ENCODE measurements at regions of chr7 and their contacts with region 1.

Region 1: GRCh38 chr7:142603870-142604448 is 145.3 kb upstream of the PRSS1 start:
- DNase-seq: peak; percentile 60
- ATAC-seq: peak; percentile 55
- H3K4me3 Mint-ChIP-seq: no peak overlapping the region
- H3K27ac Mint-ChIP-seq: no peak overlapping the region
- H3K4me1 Mint-ChIP-seq: 0 out of 2 replicates have a peak, but pooled peaks cover 2% of the 10 kb centered on the region
- H3K27me3 Mint-ChIP-seq: no peaks in the 10 kb centered on the region; the same call in 1 of the 2 replicates
- CTCF ChIP-seq: peak; percentile 42; the same call in 1 of the 2 replicates

Region 2: DNA sequence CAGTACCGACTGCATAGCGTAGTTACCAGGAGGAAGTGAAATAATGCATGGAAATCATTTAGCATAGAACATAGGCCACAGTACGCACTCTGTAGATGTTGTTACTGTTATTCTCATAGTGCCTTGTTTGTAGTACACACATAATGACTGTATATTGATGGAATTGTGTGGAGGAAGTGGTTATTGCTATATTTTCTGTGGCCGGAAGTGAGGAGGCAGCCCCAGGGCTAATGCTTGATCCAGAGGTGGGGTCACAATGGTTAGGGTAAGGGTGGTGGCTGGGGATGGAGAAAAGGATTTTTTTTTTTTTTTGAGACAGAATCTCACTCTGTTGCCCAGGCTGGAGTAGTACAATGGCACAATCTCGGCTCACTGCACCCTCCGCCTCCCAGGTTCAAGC is 612.8 kb before region 1 on chr7:
- CTCF ChIA-PET with region 1: no interaction called
- POLR2A ChIA-PET with region 1: no interaction called
- DNase-seq: no peak
- ATAC-seq: no peak
- H3K4me3 Mint-ChIP-seq: no peak overlapping the region
- H3K27ac Mint-ChIP-seq: no peak overlapping the region
- H3K4me1 Mint-ChIP-seq: peaks cover 11% of the 10 kb centered on the region
- H3K27me3 Mint-ChIP-seq: peaks cover 8% of the 10 kb centered on the region
- CTCF ChIP-seq: no peak

Region 3: DNA sequence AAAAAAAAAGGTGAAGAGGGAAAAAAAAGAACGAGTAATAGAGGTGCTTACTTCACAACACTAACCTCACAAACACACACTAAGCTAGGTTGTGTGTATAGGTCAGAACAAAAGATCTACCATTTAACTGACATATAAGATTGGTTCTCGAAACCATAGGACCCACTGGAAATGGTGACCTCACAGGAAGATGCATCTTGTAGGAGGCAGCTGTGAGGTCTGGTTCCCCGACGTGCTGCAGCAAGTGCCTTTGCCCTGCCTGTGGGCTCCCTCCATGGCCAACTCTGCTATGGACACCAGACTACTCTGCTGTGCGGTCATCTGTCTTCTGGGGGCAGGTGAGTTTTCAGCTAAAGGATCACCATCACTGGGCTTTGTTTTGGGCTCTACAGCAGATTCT is 11.5 kb after region 1 on chr7:
- CTCF ChIA-PET with region 1: interaction called, 11 read pairs
- POLR2A ChIA-PET with region 1: no interaction called
- DNase-seq: no peak
- ATAC-seq: no peak
- H3K4me3 Mint-ChIP-seq: no peak overlapping the region
- H3K27ac Mint-ChIP-seq: no peak overlapping the region
- H3K4me1 Mint-ChIP-seq: peaks cover 8% of the 10 kb centered on the region
- H3K27me3 Mint-ChIP-seq: no peaks in the 10 kb centered on the region
- CTCF ChIP-seq: no peak

Region 4: GRCh38 chr7:142626420-142627035 is 22.6 kb after region 1 on chr7:
- CTCF ChIA-PET with region 1: interaction called, 12 read pairs
- POLR2A ChIA-PET with region 1: no interaction called
- DNase-seq: peak; percentile 89
- ATAC-seq: peak; percentile 97
- H3K4me3 Mint-ChIP-seq: no peak overlapping the region
- H3K27ac Mint-ChIP-seq: no peak overlapping the region
- H3K4me1 Mint-ChIP-seq: peaks cover 2% of the 10 kb centered on the region; the same call in 1 of the 2 replicates
- H3K27me3 Mint-ChIP-seq: peaks cover 3% of the 10 kb centered on the region
- CTCF ChIP-seq: peak; percentile 76